AG04450 (cell line): ENCODE measurements at regions of chr4 and their contacts with region 1.

Region 1: DNA sequence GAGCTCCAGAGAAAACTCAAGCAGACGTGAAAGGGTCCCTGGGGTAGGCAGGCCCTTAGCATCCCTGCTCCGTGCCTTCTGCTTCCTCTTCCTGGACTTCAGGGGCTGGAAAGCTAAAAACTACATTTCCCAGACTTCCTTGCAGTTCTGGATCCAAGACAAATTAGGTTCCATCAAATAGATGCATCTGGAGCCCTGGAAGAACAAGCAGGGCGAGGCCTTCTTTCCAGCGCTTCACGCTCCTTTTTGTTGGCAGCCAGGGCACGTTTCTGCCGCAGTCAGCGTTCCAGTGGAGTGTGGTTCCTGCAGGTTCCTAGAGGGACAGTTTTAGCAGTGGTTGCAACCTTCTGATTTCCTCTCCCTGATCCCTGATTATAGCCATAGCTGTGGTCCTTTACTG is 53.6 kb upstream of the MSX1 start:
- DNase-seq: no peak
- H3K4me3 ChIP-seq: no peak overlapping the region
- H3K27ac ChIP-seq: no peak overlapping the region
- H3K27me3 ChIP-seq: peaks cover 14% of the 10 kb centered on the region
- CTCF ChIP-seq: no peak

Region 2: GRCh38 chr4:4852591-4853375 is 46.9 kb after region 1 on chr4:
- CTCF ChIA-PET with region 1: interaction called, 10 read pairs
- POLR2A ChIA-PET with region 1: no interaction called
- DNase-seq: peak; percentile 37
- H3K4me3 ChIP-seq: peak overlapping the region; percentile 42
- H3K27ac ChIP-seq: peak overlapping the region; percentile 47
- H3K27me3 ChIP-seq: peaks cover 48% of the 10 kb centered on the region
- CTCF ChIP-seq: peak; percentile 48